ENCODE measurements at regions of chr14 and their contacts with region 1.

Region 1: GRCh38 chr14:76386915-76387782 is 11.2 kb downstream of the ESRRB start:
- DNase-seq: no peak
- H3K4me3 ChIP-seq: no peak overlapping the region
- H3K27me3 ChIP-seq: peaks cover 11% of the 10 kb centered on the region
- CTCF ChIP-seq: peak; percentile 99

Region 2: DNA sequence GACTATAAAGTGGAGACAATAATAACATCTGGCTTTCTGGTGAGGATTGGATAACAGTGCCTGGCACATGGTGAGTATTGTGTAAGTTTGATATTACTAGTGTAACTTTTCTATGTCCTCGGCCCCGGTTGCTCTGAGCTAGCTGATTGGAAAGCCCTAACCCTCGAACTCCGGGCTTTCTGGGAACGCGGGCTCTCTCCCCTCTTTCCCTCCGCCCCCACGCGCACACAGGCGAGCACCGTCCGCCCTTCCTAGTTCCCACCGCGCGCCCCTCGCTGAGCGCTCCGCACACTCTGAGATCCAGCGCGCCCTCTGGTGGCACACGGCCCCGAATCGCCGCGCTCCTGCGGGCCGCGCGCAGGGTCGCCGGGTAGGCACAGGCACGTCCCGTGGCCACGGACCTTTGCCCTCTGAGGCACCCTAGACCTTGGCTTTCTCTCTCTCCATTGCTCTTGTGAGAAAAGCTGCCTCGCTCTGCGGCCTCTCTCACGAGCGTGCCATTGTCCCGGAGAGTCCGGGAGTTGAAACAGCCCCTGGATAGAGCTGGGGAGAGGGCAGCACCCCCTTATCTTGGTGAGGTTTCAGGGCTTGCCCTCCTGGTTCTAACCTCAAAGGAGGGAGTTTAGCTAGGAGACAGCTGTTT is 34.4 kb before region 1 on chr14:
- CTCF ChIA-PET with region 1: interaction called, 16 read pairs
- POLR2A ChIA-PET with region 1: no interaction called
- DNase-seq: no peak
- H3K4me3 ChIP-seq: peak overlapping the region; percentile 23
- H3K27me3 ChIP-seq: peaks cover 9% of the 10 kb centered on the region
- CTCF ChIP-seq: peak; percentile 81

Region 3: DNA sequence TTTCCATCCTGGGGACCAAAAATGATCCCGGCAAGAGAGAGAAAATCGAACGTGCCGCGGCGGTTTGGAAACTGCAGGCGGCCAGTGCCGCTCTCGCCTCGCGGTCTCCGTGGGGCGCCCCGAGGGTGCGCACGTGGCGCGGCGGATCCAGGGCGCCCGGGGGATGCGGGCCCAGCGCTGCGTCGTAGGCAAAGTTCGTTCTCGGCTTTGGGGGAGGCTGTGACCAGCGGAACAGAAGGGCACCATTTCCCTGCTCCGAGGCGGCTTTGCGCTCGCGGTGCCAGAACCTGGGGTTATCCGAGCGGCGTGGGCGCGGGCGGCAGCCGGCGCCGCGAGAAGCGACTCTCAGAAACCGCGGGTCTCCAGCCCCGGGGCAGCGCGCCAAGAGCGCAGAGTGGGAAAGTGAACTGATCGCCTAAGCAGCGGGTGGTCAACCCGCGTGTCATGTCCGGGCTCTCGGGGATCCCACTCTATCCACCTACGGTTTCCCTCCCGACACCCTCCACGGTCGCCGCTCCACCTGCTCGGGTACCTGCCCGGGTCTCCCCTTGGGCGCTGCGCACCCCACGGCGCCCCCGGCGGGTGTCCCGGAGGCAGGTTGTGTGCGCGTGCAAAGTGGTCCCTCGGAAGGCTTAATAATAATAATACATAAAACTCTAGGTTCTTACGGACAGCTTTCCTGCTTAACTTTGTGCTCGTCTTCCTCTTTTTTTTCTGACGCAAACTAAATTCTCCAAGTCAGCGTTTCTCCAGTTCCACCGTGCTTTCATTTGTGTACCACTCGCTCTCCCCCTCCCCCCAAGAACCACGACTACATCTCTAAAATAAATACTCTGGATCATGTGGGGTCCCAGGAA is 10.0 kb before region 1 on chr14:
- CTCF ChIA-PET with region 1: interaction called, 18 read pairs
- POLR2A ChIA-PET with region 1: no interaction called
- DNase-seq: no peak
- H3K4me3 ChIP-seq: no peak overlapping the region
- H3K27me3 ChIP-seq: peaks cover 57% of the 10 kb centered on the region
- CTCF ChIP-seq: no peak